ENCODE measurements at regions of chr18 and their contacts with region 1.

Region 1: GRCh38 chr18:63588890-63589289 is 1.7 kb downstream of the SERPINB13 start:
- DNase-seq: no peak
- ATAC-seq: no peak
- H3K4me3 ChIP-seq: no peak overlapping the region
- H3K27ac ChIP-seq: no peak overlapping the region
- H3K4me1 ChIP-seq: peaks cover 0 to 5% (median 0%) of the 10 kb centered on the region in 12 donors
- H3K27me3 ChIP-seq: no peaks in the 10 kb centered on the region
- CTCF ChIP-seq: no peak
- POLR2A ChIP-seq: no peak

Region 2: GRCh38 chr18:63648241-63648640 is 59.4 kb after region 1 on chr18:
- intact Hi-C with region 1: loop called in 1 of 10 experiments (anchors 10 kb)
- DNase-seq: no peak
- ATAC-seq: no peak
- H3K4me3 ChIP-seq: no peak overlapping the region
- H3K27ac ChIP-seq: no peak overlapping the region
- H3K4me1 ChIP-seq: no peaks in the 10 kb centered on the region
- H3K27me3 ChIP-seq: no peaks in the 10 kb centered on the region
- CTCF ChIP-seq: no peak
- POLR2A ChIP-seq: no peak

Measured in heart left ventricle (tissue), 16 donors.